A549 (cell line): ENCODE measurements at regions of chr1 and their contacts with region 1.

Region 1: DNA sequence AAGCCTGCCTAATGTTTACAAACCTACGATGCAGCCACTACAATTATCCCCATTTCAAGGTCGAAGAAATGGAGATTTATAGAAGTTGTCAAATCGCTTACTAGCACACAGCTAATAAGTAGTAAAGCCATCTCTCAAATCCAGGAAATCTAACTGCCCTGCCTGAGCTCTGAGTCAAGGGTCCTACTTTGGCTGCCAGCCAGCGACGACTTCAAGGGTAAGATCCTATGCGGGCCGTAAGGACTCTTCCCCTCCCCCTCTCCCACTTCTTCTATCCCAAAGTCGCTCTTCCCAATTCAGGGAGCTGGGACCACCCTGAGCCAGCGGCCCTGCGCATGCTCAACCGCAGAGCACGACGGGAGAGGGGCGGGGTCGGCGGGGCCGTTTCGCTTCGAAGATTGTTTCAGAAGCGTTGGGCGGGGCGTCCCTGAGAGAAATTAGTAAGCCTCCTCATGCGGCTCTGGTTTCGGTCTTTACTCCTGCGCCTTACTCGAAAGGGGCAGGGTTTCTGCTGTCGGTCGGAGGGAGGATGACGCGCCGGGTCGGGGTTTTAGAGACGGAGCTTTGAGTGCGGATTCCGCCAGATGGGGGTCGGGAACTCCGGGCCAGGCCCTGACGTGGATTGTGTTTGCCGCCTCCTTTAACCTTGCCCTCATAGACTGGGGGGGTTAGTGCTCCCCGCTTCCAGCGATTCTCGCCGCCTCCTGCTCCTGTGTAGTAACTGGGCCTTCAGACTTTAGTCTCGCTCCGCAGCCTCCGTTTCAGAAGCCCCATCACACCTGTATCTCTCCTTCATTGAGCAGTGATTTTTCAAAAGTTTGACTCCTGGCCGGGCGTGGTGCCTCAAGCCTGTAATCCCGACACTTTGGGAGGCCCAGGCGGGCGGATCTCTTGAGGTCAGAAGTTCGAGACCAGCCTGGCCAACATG is at the start of gene ZMYM1:
- DNase-seq: peak; percentile 76 to 80
- ATAC-seq: peak; percentile 97 to 98
- H3K4me3 ChIP-seq: peak within 1 kb of the TSS; percentile 79
- H3K27ac ChIP-seq: peak within 1 kb of the TSS; percentile 75 to 85
- H3K4me1 ChIP-seq: peaks cover 13% of the 10 kb centered on the region; the same call in 2 of the 3 replicates
- CTCF ChIP-seq: no peak
- EP300 ChIP-seq: no peak
- POLR2A ChIP-seq: peak; percentile 35; the same call in 1 of the 2 replicates
- RAD21 ChIP-seq: no peak
- polyA plus RNA-seq, gene ZMYM1: 14.4 and 16.8 TPM in 2 replicates

Region 2: DNA sequence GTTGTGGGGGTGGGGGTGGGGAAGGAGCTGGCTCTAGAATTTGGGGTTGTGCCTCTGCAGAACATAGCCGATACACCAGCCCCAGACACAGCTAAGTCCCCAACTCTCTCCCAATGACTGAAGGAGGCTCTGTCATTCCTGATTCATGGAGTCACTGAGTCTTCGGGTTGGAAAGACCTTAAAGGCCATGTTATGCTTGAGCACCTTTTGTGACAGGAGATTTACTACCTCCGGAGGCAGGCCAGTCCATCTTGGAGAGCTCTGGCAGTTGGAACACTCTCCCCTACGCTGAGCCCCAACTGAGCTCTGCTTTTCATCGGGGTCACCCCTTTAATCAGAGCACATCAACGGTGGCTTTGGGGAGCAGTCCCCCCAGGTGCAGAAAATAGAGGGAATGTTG is 608.9 kb before region 1 on chr1:
- CTCF ChIA-PET with region 1: no interaction called
- POLR2A ChIA-PET with region 1: no interaction called
- DNase-seq: no peak
- ATAC-seq: no peak
- H3K4me3 ChIP-seq: no peak overlapping the region
- H3K27ac ChIP-seq: no peak overlapping the region
- H3K4me1 ChIP-seq: no peaks in the 10 kb centered on the region
- CTCF ChIP-seq: no peak
- EP300 ChIP-seq: no peak
- POLR2A ChIP-seq: no peak
- RAD21 ChIP-seq: no peak

Region 3: GRCh38 chr1:34929497-34929852 is 149.8 kb before region 1 on chr1 and contains the start of gene DLGAP3:
- CTCF ChIA-PET with region 1: no interaction called
- POLR2A ChIA-PET with region 1: interaction called, 12 read pairs
- DNase-seq: no peak
- ATAC-seq: peak in 1 of 2 experiments; percentile 7; a peak in 1 of 6 replicates
- H3K4me3 ChIP-seq: peak within 1 kb of the TSS; percentile 68
- H3K27ac ChIP-seq: peak within 1 kb of the TSS in 1 of 2 experiments; percentile 75; a peak in 2 of 6 replicates
- H3K4me1 ChIP-seq: 0 out of 3 replicates have a peak, but pooled peaks cover 3% of the 10 kb centered on the region
- CTCF ChIP-seq: no peak
- EP300 ChIP-seq: no peak
- POLR2A ChIP-seq: no peak
- RAD21 ChIP-seq: no peak
- polyA plus RNA-seq, gene DLGAP3: 0.03 TPM in 1 of 2 replicates, not detected in the other